Head of caudate nucleus (tissue), 42 donors: ENCODE measurements at regions of chr22 and their contacts with region 1.

Region 1: GRCh38 chr22:26398741-26399153 is 30.3 kb upstream of the ASPHD2 start:
- DNase-seq: peak; percentile 48 to 89 (median 78)

Region 2: DNA sequence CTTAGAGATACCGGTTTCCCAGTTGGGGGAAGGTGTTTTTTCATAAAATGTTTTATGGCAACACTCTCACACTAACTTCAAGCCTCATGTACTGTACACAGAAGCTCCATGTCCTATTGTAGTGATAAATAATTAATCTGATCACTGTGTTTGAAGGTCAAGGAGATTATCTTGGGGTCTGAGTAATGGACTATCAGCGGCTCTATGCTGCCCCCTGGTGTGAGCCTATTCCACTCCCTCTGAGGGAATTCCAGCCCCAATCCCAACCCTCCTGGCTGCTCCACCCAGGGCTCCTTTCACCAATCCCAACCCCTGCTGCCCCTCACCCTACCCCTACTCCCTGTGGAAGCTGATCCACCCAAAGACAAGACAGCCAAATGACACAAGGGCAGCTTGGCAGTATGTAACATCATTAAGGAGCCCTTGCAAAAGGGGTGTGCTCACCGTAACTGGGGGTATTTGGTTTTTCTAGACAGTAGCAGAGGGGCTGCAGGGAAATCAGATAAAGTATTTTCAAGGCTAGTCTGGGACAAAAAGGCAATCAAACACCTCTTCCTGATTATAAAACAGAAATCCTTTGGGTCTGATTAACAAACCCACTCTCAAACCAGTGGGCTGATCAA is 62.6 kb after region 1 on chr22:
- intact Hi-C with region 1: loop called (anchors 5 kb)
- DNase-seq: peak; percentile 44 to 88 (median 74)

Region 3: GRCh38 chr22:26489447-26490031 is 90.8 kb after region 1 on chr22:
- intact Hi-C with region 1: no loop called
- DNase-seq: no peak